ENCODE measurements at regions of chr12 and their contacts with region 1.

Region 1: DNA sequence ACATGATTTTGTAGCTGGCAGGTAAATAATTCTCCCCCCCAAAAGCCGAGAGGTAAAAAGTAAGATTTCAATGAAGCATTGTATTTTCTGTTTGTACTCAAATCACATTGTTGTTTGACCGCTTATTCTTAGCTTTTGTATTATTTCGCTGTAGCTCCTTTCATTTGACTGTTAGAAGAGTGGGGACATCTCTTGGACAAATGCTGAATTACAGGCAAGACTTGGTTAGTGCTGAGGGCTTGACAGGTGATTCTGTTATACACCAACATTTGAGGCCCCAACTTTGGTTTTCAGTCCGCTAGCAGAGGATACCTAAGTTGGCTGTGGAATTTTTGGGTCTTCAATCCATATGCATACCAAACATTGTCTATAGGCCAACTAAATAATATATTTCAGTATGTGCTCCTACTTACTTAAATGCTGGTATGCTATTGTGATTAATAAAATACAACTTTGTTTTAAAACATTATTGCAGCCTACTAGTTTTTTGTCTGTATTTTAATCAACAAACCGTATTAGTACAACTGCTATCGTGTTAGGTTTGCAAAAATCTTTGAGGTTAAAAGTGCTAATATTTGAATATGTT is 102.2 kb downstream of the ERC1 start:
- DNase-seq: peak; percentile 52
- H3K4me3 Mint-ChIP-seq: no peak overlapping the region
- H3K27ac Mint-ChIP-seq: no peak overlapping the region
- H3K4me1 Mint-ChIP-seq: peaks cover 12% of the 10 kb centered on the region
- H3K27me3 Mint-ChIP-seq: no peaks in the 10 kb centered on the region
- CTCF ChIP-seq: peak; percentile 45

Region 2: GRCh38 chr12:569803-570434 is 523.3 kb before region 1 on chr12:
- CTCF ChIA-PET with region 1: interaction called, 6 read pairs
- intact Hi-C with region 1: loop called (anchors 5 kb)
- DNase-seq: peak; percentile 91
- H3K4me3 Mint-ChIP-seq: peak overlapping the region; percentile 80
- H3K27ac Mint-ChIP-seq: no peak overlapping the region
- H3K4me1 Mint-ChIP-seq: peaks cover 17% of the 10 kb centered on the region
- H3K27me3 Mint-ChIP-seq: peaks cover 17% of the 10 kb centered on the region
- CTCF ChIP-seq: peak; percentile 92

Region 3: DNA sequence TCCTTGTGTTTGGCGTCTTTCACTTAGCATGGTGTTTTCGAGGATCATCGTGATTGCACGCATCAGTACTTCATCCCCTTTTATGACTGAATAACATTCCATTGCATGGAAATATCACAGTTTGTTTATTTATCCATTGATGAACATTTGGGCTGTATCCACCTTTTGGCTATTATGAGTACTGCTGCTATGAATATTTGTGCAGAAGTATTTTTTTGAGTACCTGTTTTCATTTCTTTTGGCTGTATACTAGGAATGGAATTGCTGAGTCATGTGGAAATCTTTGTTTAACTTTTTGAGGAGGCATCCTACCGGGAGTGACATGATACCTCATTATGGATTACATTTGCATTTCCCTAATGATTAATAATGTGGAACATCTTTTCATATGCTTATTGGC is 274.5 kb before region 1 on chr12:
- CTCF ChIA-PET with region 1: no interaction called
- intact Hi-C with region 1: loop called (anchors 5 kb)
- DNase-seq: no peak
- H3K4me3 Mint-ChIP-seq: no peak overlapping the region
- H3K27ac Mint-ChIP-seq: no peak overlapping the region
- H3K4me1 Mint-ChIP-seq: peaks cover 14% of the 10 kb centered on the region
- H3K27me3 Mint-ChIP-seq: no peaks in the 10 kb centered on the region
- CTCF ChIP-seq: no peak

Region 4: GRCh38 chr12:1003600-1004271 is 89.5 kb before region 1 on chr12:
- CTCF ChIA-PET with region 1: no interaction called
- intact Hi-C with region 1: no loop called
- DNase-seq: no peak
- H3K4me3 Mint-ChIP-seq: no peak overlapping the region
- H3K27ac Mint-ChIP-seq: no peak overlapping the region
- H3K4me1 Mint-ChIP-seq: no peaks in the 10 kb centered on the region
- H3K27me3 Mint-ChIP-seq: no peaks in the 10 kb centered on the region
- CTCF ChIP-seq: no peak